Stomach (tissue), 19 donors: ENCODE measurements at regions of chr18 and their contacts with region 1.

Region 1: DNA sequence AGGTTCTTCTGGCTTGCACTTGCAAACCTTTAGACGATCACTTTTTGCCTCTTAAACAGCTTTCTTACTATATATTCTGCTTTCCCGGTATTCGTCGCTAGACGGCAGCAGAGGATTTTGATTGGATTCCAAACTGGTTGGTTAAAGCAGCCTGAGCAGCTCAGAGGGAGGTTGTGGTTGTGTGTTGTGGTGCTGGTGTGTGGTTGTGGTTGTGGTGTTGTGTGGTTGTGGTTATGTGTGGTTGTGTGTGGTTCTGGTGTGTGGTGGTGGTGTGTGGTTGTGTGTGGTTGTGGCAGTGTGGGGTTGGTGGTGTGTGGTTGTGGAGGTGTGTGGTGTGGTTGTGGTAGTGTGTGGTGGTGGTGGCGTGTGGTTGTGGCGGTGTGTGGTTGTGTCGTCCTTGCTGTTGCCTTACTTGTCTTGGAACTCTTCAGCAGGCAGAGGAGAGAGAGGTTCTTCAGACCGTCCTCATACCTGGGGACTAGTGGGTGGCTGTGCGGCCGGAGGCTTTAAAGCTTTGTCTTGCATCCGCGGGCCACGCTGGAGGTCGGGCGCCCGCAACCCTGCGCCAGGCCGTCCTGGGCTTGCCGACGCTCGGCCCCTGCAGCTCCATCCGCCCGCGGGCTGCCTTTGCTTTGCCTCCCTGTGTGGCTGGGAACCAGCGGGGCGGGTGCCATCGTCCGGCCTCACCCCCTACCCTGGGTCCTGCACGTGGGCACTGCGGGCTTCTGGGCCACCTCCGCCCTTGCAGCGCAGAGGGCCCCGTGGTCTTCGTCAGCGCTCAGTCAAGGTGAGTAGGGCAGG is 190.8 kb downstream of the ARHGAP28 start:
- DNase-seq: peak; percentile 77 to 83
- H3K4me3 ChIP-seq: no peak overlapping the region
- H3K27ac ChIP-seq: no peak overlapping the region
- H3K4me1 ChIP-seq: no peaks in the 10 kb centered on the region
- H3K27me3 ChIP-seq: no peaks in the 10 kb centered on the region
- CTCF ChIP-seq: peak in 5 of 7 experiments; percentile 30 to 93 (median 53)
- EP300 ChIP-seq: no peak
- POLR2A ChIP-seq: no peak

Region 2: GRCh38 chr18:6994771-6995435 is 74.6 kb after region 1 on chr18:
- intact Hi-C with region 1: loop called (anchors 10 kb)
- DNase-seq: no peak
- H3K4me3 ChIP-seq: no peak overlapping the region
- H3K27ac ChIP-seq: no peak overlapping the region
- H3K4me1 ChIP-seq: peaks cover 0 to 7% (median 0%) of the 10 kb centered on the region in 4 donors
- H3K27me3 ChIP-seq: no peaks in the 10 kb centered on the region
- CTCF ChIP-seq: no peak
- EP300 ChIP-seq: no peak
- POLR2A ChIP-seq: no peak

Region 3: DNA sequence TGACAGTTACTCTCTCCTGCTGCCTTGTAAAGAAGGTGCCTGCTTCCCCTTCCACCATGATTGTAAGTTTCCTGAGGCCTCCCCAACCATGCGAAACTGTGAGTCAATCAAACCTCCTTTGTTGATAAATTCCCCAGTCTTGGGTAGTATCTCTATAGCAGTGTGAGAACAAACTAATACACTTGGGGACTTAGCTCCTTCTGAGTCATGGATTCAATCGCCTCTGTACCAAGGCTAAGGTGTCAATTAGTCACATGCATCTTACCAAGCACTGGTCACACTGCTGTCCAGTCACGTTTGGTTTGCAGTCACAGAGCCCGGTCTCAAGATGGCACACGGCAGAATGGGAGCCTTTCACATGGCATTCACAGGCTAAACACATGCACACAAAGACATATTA is 96.7 kb after region 1 on chr18:
- intact Hi-C with region 1: loop called (anchors 5 kb)
- DNase-seq: no peak
- H3K4me3 ChIP-seq: no peak overlapping the region
- H3K27ac ChIP-seq: no peak overlapping the region
- H3K4me1 ChIP-seq: no peaks in the 10 kb centered on the region
- H3K27me3 ChIP-seq: no peaks in the 10 kb centered on the region
- CTCF ChIP-seq: no peak
- EP300 ChIP-seq: no peak
- POLR2A ChIP-seq: no peak